ENCODE measurements at regions of chr4 and their contacts with region 1.

Region 1: GRCh38 chr4:8547108-8547970 is 32.9 kb upstream of the GPR78 start:
- DNase-seq: peak; percentile 66 to 82 (median 71)
- ATAC-seq: peak; percentile 85
- H3K4me3 ChIP-seq: no peak overlapping the region
- H3K27ac ChIP-seq: peak overlapping the region; percentile 78
- H3K4me1 ChIP-seq: peaks cover 36 to 39% of the 10 kb centered on the region in 2 experiments
- H3K27me3 ChIP-seq: no peaks in the 10 kb centered on the region
- CTCF ChIP-seq: peak; percentile 60 to 77 (median 69)
- EP300 ChIP-seq: no peak; the same call in none of the 2 replicates
- POLR2A ChIP-seq: no peak
- RAD21 ChIP-seq: peak; percentile 53 to 85

Region 2: DNA sequence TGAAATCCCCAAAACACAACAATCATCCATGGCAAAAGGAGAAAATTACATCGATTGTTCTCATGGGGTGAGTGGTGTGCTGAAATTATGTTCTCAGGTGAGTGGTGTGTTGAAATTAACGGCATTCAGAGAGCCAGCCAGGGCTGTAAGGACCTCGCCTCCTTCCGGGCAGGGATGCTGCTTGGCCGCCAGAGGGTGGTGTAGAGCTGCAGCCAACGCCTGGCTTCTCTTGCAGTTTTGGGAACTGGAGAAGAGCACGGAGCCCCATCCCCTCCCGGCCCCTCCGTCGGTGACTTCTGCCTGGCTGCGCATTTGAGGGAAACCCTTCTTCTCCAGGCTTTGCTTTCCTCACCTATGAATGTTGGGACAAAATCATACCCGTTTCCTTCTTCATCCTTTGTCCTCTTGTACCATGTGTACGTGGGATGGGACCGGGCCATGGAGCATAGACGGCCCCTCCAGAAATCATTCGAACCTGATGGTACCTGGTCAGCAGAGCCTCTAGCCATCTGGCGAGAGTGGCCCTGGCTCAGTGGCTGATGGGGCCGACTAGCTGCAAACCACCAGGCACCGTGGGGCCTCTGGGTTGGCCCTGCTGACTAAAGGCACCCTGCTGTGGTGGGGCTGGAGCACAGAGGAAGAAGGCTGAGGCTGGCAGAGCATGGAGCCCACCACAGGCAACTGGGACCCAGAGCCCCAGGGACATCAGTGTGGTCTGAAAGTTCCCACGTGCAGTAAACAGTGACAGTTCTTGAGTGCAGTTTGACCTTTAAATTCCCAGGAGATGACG is 78.4 kb before region 1 on chr4:
- CTCF ChIA-PET with region 1: interaction called, 8 read pairs
- POLR2A ChIA-PET with region 1: interaction called, 9 read pairs
- in situ Hi-C with region 1: no loop called
- intact Hi-C with region 1: loop called (anchors 1 kb)
- DNase-seq: peak; percentile 72 to 78 (median 76)
- ATAC-seq: peak; percentile 93
- H3K4me3 ChIP-seq: no peak overlapping the region
- H3K27ac ChIP-seq: no peak overlapping the region; the same call in 2 of the 3 replicates
- H3K4me1 ChIP-seq: peaks cover 0 to 35% of the 10 kb centered on the region in 2 experiments; a peak in 4 of 5 replicates
- H3K27me3 ChIP-seq: no peaks in the 10 kb centered on the region
- CTCF ChIP-seq: peak; percentile 93 to 95 (median 94)
- EP300 ChIP-seq: no peak
- POLR2A ChIP-seq: no peak
- RAD21 ChIP-seq: peak; percentile 94 to 98

Region 3: DNA sequence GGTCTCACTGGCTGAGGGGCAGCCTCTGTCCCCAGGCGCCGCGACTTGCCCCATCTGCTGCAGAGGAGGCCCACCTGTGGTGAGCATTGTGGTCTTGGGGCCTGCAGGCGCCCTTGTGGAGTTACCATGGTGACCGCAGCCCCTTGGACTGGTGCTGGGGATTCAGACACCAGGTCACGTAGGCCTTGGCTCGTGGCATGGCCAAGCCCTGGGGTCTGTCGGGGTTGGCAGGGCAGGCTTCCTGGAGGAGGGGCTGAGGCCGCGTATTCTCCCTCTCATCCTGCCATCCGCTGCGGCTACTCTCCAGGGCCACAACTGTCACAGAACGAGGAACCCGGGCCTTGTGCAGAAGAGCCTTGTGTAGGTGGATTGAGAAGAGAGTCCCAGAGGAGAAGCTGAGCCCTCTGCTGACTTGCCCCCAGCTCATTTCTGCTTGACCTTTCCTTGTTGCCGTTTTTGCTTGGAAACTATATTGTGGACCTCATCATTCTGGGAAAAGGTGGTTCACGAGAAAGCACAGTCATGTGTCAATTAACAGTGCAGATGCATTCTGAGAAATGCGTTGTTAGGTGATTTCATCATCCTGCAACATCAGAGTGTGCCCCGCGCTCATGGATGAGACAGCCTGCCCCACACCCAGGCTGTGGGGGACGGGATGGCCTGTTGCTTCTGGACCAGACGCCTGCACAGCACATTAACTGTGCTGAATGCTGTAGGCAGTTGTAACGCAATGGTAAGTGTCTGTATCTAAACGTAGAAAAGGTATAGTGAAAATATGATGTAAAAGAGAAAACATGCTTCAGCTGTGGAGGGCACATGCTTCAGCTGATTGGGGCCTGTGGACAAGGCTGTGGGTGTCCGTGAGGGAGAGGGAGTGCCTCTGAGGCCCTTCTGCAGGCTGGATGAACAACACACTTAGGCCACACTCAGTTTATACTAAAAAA is 68.3 kb before region 1 on chr4:
- CTCF ChIA-PET with region 1: no interaction called
- POLR2A ChIA-PET with region 1: no interaction called
- in situ Hi-C with region 1: no loop called
- intact Hi-C with region 1: loop called (anchors 2 kb)
- DNase-seq: peak in 3 of 4 experiments; percentile 29 to 66 (median 64)
- ATAC-seq: peak; percentile 91
- H3K4me3 ChIP-seq: no peak overlapping the region
- H3K27ac ChIP-seq: peak overlapping the region; percentile 73; the same call in 2 of the 3 replicates
- H3K4me1 ChIP-seq: peaks cover 26 to 29% of the 10 kb centered on the region in 2 experiments
- H3K27me3 ChIP-seq: no peaks in the 10 kb centered on the region
- CTCF ChIP-seq: no peak
- EP300 ChIP-seq: peak; percentile 96
- POLR2A ChIP-seq: no peak
- RAD21 ChIP-seq: peak in 1 of 2 experiments; percentile 31; a peak in 2 of 4 replicates

Region 4: GRCh38 chr4:8594097-8595038 is 47.0 kb after region 1 on chr4:
- CTCF ChIA-PET with region 1: no interaction called
- POLR2A ChIA-PET with region 1: no interaction called
- in situ Hi-C with region 1: no loop called
- intact Hi-C with region 1: loop called (anchors 1 kb)
- DNase-seq: peak; percentile 84 to 94 (median 92)
- ATAC-seq: peak; percentile 87
- H3K4me3 ChIP-seq: no peak overlapping the region
- H3K27ac ChIP-seq: no peak overlapping the region
- H3K4me1 ChIP-seq: peaks cover 13 to 38% of the 10 kb centered on the region in 2 experiments; a peak in 4 of 5 replicates
- H3K27me3 ChIP-seq: peaks cover 7 to 21% of the 10 kb centered on the region in 2 experiments; a peak in 3 of 5 replicates
- CTCF ChIP-seq: peak; percentile 78 to 94 (median 81)
- EP300 ChIP-seq: no peak
- POLR2A ChIP-seq: no peak
- RAD21 ChIP-seq: peak; percentile 91 to 95

Measured in K562 (cell line).